Activated B cell treated with CpG ODN at 0.5 μM for 24 hours (primary cell): ENCODE measurements at regions of chr11 and their contacts with region 1.

Region 1: GRCh38 chr11:60944490-60945294 is 7.3 kb downstream of the SLC15A3 start:
- DNase-seq: no peak
- ATAC-seq: peak; percentile 31
- H3K4me3 Mint-ChIP-seq: no peak overlapping the region
- H3K27ac Mint-ChIP-seq: peak overlapping the region; percentile 27
- H3K4me1 Mint-ChIP-seq: peaks cover 66% of the 10 kb centered on the region
- H3K27me3 Mint-ChIP-seq: no peaks in the 10 kb centered on the region
- CTCF ChIP-seq: no peak

Region 2: GRCh38 chr11:60924110-60924905 is 20.4 kb before region 1 on chr11 and contains the start of gene TMEM132A:
- CTCF ChIA-PET with region 1: no interaction called
- POLR2A ChIA-PET with region 1: interaction called, 102 read pairs
- intact Hi-C with region 1: no loop called
- DNase-seq: no peak
- ATAC-seq: peak; percentile 27
- H3K4me3 Mint-ChIP-seq: peak within 1 kb of the TSS; percentile 69
- H3K27ac Mint-ChIP-seq: no peak within 1 kb of the TSS
- H3K4me1 Mint-ChIP-seq: peaks cover 33% of the 10 kb centered on the region
- H3K27me3 Mint-ChIP-seq: peaks cover 4% of the 10 kb centered on the region
- CTCF ChIP-seq: no peak
- total RNA-seq, gene TMEM132A: 8.2 and 8.7 TPM in 2 replicates

Region 3: GRCh38 chr11:60932605-60933356 is 11.9 kb before region 1 on chr11:
- CTCF ChIA-PET with region 1: interaction called, 3 read pairs
- POLR2A ChIA-PET with region 1: interaction called, 60 read pairs
- intact Hi-C with region 1: loop called (anchors 1 kb)
- DNase-seq: no peak
- ATAC-seq: peak; percentile 57
- H3K4me3 Mint-ChIP-seq: peak overlapping the region; percentile 66
- H3K27ac Mint-ChIP-seq: peak overlapping the region; percentile 89
- H3K4me1 Mint-ChIP-seq: peaks cover 48% of the 10 kb centered on the region
- H3K27me3 Mint-ChIP-seq: no peaks in the 10 kb centered on the region
- CTCF ChIP-seq: no peak